Activated CD4-positive, alpha-beta memory T cell treated with anti-CD3 and anti-CD28 coated beads for 36 hours (primary cell): ENCODE measurements at regions of chr4 and their contacts with region 1.

Region 1: DNA sequence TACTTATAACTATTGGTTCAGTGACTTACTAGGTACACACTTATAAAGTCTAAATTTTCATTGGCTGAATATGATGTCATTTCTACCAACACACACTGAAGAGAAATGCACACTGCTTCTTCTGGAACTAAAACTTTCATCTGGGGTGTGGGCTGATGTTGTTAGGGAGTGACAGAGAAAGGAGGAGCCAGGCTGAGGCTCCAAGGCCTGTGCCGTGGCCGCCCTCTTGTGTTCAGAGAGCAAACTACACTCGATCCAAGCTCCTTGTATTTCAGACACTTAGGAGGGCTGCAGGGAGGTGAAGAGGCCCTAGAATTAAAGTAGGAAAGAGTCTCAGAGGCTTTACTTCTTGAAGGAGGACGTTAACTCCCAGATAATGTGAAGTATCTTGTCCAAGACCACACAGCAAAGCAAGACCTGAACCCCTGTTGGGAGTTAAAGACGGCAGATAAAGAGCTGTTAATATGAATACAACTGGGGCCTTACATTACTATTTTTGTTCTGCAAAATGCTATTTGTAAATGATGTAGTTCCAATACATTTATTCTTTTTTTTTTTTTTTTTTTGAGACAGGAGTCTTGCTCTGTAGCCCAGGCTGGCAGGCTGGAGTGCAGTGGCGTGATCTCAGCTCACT is 137.5 kb downstream of the AFAP1 start:
- DNase-seq: peak; percentile 90
- H3K4me3 Mint-ChIP-seq: no peak overlapping the region
- H3K27ac Mint-ChIP-seq: peak overlapping the region; percentile 46
- H3K4me1 Mint-ChIP-seq: peaks cover 25% of the 10 kb centered on the region
- H3K27me3 Mint-ChIP-seq: no peaks in the 10 kb centered on the region

Region 2: GRCh38 chr4:7719354-7720174 is 82.6 kb before region 1 on chr4:
- CTCF ChIA-PET with region 1: interaction called, 8 read pairs
- POLR2A ChIA-PET with region 1: no interaction called
- intact Hi-C with region 1: loop called (anchors 2 kb)
- DNase-seq: peak; percentile 70
- H3K4me3 Mint-ChIP-seq: no peak overlapping the region
- H3K27ac Mint-ChIP-seq: no peak overlapping the region
- H3K4me1 Mint-ChIP-seq: peaks cover 2% of the 10 kb centered on the region
- H3K27me3 Mint-ChIP-seq: peaks cover 3% of the 10 kb centered on the region

Region 3: GRCh38 chr4:7770224-7771050 is 31.8 kb before region 1 on chr4:
- CTCF ChIA-PET with region 1: interaction called, 104 read pairs
- POLR2A ChIA-PET with region 1: no interaction called
- intact Hi-C with region 1: loop called (anchors 1 kb)
- DNase-seq: peak; percentile 48
- H3K4me3 Mint-ChIP-seq: no peak overlapping the region
- H3K27ac Mint-ChIP-seq: peak overlapping the region; percentile 78
- H3K4me1 Mint-ChIP-seq: peaks cover 27% of the 10 kb centered on the region
- H3K27me3 Mint-ChIP-seq: no peaks in the 10 kb centered on the region

Region 4: GRCh38 chr4:7827991-7828720 is 25.9 kb after region 1 on chr4:
- CTCF ChIA-PET with region 1: interaction called, 13 read pairs
- POLR2A ChIA-PET with region 1: no interaction called
- intact Hi-C with region 1: loop called (anchors 2 kb)
- DNase-seq: peak; percentile 84
- H3K4me3 Mint-ChIP-seq: peak overlapping the region; percentile 25
- H3K27ac Mint-ChIP-seq: peak overlapping the region; percentile 90
- H3K4me1 Mint-ChIP-seq: peaks cover 69% of the 10 kb centered on the region
- H3K27me3 Mint-ChIP-seq: no peaks in the 10 kb centered on the region

Region 5: GRCh38 chr4:7850489-7850888 is 48.3 kb after region 1 on chr4:
- CTCF ChIA-PET with region 1: interaction called, 110 read pairs
- POLR2A ChIA-PET with region 1: interaction called, 3 read pairs
- intact Hi-C with region 1: loop called (anchors 2 kb)
- DNase-seq: no peak
- H3K4me3 Mint-ChIP-seq: no peak overlapping the region
- H3K27ac Mint-ChIP-seq: peak overlapping the region; percentile 51
- H3K4me1 Mint-ChIP-seq: peaks cover 81% of the 10 kb centered on the region
- H3K27me3 Mint-ChIP-seq: no peaks in the 10 kb centered on the region

Region 6: DNA sequence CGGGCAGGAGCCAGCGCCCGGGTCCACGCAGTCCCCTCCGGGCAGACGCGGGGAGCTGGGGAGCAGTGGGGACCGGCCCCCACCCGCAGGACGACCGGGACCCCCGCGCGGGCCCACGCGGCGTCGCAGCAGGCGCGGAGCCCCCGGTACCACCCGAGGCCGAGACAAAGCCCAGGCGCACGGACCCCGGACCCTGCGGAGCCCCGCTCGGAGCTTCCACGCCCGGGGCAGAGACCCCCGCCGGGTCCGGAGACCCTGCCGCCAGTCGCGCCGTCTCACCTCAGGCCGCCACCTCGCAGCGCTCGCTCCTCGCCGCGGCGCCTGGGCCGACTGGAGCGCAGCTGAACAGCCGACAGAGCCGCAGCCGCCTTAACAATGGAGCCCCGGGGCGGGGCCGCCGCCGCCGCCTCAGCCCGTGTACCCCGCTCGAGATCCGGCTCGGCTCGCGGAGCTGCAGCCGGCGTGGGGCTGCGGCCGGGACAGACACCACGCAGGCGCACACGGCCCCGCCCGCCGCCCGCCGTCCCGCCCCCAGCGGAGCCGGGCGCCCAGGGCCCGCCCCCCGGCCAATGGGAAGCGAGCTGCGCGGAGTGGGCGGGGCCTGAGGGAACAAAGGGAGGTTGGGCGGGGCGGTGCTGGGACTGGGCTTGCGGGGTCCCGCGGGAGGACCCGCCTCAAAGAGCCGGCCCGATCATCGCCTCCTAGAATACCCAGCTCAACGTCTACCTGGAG is 137.3 kb after region 1 on chr4 and contains the start of gene AFAP1:
- CTCF ChIA-PET with region 1: interaction called, 11 read pairs
- POLR2A ChIA-PET with region 1: no interaction called
- intact Hi-C with region 1: no loop called
- DNase-seq: peak; percentile 91
- H3K4me3 Mint-ChIP-seq: peak within 1 kb of the TSS; percentile 76
- H3K27ac Mint-ChIP-seq: no peak within 1 kb of the TSS
- H3K4me1 Mint-ChIP-seq: peaks cover 31% of the 10 kb centered on the region
- H3K27me3 Mint-ChIP-seq: no peaks in the 10 kb centered on the region
- total RNA-seq, gene AFAP1: 37.7 to 38.4 TPM

Region 7: GRCh38 chr4:7987148-7987989 is 185.2 kb after region 1 on chr4:
- CTCF ChIA-PET with region 1: interaction called, 212 read pairs
- POLR2A ChIA-PET with region 1: no interaction called
- intact Hi-C with region 1: loop called (anchors 1 kb)
- DNase-seq: peak; percentile 87
- H3K4me3 Mint-ChIP-seq: no peak overlapping the region
- H3K27ac Mint-ChIP-seq: no peak overlapping the region
- H3K4me1 Mint-ChIP-seq: peaks cover 7% of the 10 kb centered on the region
- H3K27me3 Mint-ChIP-seq: peaks cover 4% of the 10 kb centered on the region

Region 8: DNA sequence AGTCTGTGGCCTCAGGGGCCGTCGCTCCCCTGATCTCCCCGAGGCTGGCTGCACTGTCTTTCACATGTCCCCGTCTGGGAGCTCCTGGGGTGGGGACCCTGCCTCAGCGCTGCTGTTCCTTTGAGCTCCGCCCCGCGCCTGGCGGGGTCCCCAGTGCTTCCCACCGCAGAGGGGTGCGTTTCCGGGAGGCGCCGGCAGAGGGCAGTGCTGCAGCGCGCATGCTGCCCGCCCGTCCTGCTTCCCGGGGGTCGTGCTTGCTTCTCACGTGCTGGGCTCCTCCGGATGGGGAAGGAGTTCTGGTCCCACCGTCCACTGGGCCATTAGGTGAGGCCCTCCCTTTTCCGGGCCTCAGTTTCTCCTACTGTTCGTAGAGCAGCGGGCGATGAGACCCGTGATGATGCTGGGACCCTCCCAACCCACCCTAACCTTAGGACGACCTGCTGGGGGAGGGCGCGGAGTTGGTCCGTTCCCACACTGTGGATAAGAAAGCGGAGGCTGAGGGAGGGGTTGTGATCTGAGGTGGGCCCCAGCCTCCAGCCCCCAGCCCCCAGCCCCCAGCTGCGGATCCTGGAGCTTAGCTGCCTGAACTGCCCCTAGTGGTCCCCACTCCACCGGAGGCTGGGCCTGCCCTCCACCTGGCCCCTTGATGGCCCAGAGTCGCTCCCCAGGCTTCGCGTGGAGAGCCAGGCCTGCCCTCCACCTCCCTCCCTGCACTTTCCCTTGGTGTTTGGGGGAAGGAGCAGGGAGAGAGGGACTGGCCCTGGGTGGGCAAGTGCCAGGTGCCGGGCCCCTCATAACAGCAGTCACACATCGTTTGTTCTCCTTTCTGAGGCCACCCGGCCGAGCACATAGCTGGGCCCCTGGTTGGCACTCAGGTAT is 805.6 kb after region 1 on chr4:
- CTCF ChIA-PET with region 1: no interaction called
- POLR2A ChIA-PET with region 1: no interaction called
- intact Hi-C with region 1: no loop called
- DNase-seq: peak; percentile 46
- H3K4me3 Mint-ChIP-seq: no peak overlapping the region
- H3K27ac Mint-ChIP-seq: no peak overlapping the region
- H3K4me1 Mint-ChIP-seq: no peaks in the 10 kb centered on the region
- H3K27me3 Mint-ChIP-seq: peaks cover 2% of the 10 kb centered on the region